HCT116 (cell line): ENCODE measurements at regions of chr6 and their contacts with region 1.

Region 1: DNA sequence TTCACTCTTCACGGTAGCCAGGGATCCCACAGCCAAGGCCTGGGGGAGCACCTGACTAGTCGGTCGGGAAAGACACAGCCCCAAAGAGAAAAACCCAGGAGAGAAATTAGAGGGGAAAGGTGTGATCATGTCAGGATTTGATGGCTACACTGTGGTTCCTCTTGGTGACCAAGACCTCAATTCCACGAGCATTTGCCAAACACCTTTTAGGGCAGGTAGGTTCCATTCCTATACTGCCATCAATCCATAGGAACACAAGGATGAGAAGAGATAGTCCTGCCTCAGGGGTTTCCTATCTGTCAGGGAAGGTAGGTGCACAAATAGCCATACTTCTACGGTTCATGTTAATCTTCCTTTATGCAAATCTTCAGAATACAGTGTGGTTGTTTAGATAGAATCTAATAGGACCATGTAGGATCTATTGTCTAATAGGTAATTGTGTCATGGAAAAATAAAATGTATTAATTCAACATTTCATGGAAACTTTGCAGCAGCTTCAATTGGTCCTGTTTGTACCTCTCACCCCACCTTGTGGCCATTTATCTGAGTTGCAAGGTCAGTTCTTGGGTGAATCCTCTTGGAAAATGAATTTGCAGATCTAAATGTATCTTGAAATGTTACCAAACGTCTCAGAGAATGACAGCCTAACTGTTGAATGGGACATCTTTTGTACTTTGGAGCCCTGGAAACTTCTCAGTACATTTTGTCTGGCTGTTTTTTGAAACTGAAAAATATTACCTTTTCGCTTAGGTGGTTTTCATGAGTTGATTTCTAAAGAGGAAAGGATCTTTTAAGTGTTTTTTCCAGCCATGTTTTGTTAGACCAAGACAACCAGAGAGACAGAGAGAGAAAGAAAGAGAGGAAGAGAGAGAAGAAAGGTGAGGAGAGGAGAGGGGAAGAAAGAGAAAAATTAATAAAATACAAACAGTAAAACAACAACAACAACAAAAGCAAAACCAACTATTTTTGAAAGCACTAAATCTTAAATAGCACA is 33.7 kb upstream of the IYD start:
- DNase-seq: peak; percentile 80
- ATAC-seq: peak; percentile 74
- H3K4me3 ChIP-seq: no peak overlapping the region
- H3K27ac ChIP-seq: no peak overlapping the region
- H3K4me1 ChIP-seq: peaks cover 0 to 8% of the 10 kb centered on the region in 2 experiments; a peak in 2 of 4 replicates
- H3K27me3 ChIP-seq: no peaks in the 10 kb centered on the region
- CTCF ChIP-seq: peak; percentile 70 to 94 (median 91)
- POLR2A ChIP-seq: no peak
- RAD21 ChIP-seq: peak; percentile 98

Region 2: GRCh38 chr6:149934249-149935156 is 400.6 kb before region 1 on chr6:
- CTCF ChIA-PET with region 1: no interaction called
- POLR2A ChIA-PET with region 1: no interaction called
- RAD21 ChIA-PET with region 1: no interaction called
- intact Hi-C with region 1: loop called (anchors 5 kb)
- DNase-seq: peak; percentile 76
- ATAC-seq: peak; percentile 67
- H3K4me3 ChIP-seq: no peak overlapping the region
- H3K27ac ChIP-seq: no peak overlapping the region
- H3K4me1 ChIP-seq: peaks cover 0 to 3% of the 10 kb centered on the region in 2 experiments; a peak in 1 of 4 replicates
- H3K27me3 ChIP-seq: no peaks in the 10 kb centered on the region
- CTCF ChIP-seq: peak; percentile 63 to 88 (median 87)
- POLR2A ChIP-seq: no peak
- RAD21 ChIP-seq: peak; percentile 96

Region 3: DNA sequence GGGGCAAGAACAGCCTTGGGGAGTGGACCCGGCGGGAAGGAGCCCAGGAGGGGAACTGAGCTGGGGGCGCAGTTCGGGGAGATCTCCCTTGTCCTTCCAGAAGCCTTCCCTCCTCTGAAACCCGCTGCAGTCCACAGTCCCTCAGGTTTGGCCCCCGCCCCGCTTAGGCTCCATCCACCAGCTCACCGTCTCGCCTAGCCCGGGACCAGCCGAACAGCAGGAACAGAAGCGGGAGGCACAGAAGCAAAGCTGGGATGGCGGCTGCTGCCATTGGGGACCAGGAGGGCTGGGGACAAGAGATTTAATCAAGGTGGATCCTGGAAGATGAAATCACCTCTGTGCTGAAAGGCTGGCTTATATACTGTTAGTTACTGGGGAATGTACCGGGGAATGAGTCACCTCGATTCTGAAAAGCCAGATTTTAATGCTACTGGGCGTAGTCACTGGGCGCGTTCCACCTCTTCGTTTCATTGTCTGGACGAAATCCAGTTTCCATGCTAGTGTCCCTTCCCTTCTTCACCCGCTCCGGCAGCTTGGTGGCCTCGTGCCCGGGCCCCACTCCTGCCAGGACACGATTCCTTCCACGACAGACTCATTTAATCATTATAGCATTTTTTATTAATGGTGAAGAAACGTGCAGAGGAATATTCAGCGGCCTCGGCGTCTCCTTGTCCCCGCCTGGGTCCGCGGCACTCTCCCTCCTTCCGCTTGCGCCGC is 309.7 kb before region 1 on chr6 and contains the start of gene RAET1L:
- CTCF ChIA-PET with region 1: no interaction called
- POLR2A ChIA-PET with region 1: no interaction called
- RAD21 ChIA-PET with region 1: no interaction called
- intact Hi-C with region 1: loop called (anchors 5 kb)
- DNase-seq: peak; percentile 65
- ATAC-seq: peak; percentile 73
- H3K4me3 ChIP-seq: peak within 1 kb of the TSS; percentile 43 to 58
- H3K27ac ChIP-seq: peak within 1 kb of the TSS; percentile 71
- H3K4me1 ChIP-seq: peaks cover 21 to 28% of the 10 kb centered on the region in 2 experiments
- H3K27me3 ChIP-seq: no peaks in the 10 kb centered on the region
- CTCF ChIP-seq: no peak
- POLR2A ChIP-seq: no peak
- RAD21 ChIP-seq: no peak
- total RNA-seq, gene RAET1L: 1.5 TPM

Region 4: DNA sequence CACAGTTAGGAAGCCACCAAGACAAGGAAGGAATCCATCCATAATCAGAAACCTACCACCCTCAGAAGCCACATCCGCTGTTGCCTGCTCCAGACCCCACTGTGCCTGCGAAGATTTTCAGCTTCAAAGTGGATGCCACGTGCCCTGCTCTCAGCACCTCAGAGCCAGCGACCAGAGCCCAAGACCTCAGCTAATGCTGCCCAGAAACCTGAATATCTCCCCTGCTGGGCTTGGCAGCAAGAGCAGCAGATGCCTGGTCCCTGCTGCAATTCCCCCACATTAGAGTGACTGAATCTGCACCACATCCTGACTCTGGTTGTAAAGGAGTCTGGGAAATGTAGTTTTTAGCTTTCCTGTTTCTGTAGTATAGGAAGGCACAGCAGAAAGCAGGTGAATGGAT is 255.5 kb before region 1 on chr6:
- CTCF ChIA-PET with region 1: interaction called, 24 read pairs
- POLR2A ChIA-PET with region 1: interaction called, 5 read pairs
- RAD21 ChIA-PET with region 1: interaction called, 4 to 5 read pairs
- intact Hi-C with region 1: loop called (anchors 1 kb)
- DNase-seq: no peak
- ATAC-seq: no peak
- H3K4me3 ChIP-seq: no peak overlapping the region
- H3K27ac ChIP-seq: no peak overlapping the region
- H3K4me1 ChIP-seq: peaks cover 2 to 20% of the 10 kb centered on the region in 2 experiments; a peak in 3 of 4 replicates
- H3K27me3 ChIP-seq: no peaks in the 10 kb centered on the region
- CTCF ChIP-seq: no peak
- POLR2A ChIP-seq: no peak
- RAD21 ChIP-seq: no peak

Region 5: DNA sequence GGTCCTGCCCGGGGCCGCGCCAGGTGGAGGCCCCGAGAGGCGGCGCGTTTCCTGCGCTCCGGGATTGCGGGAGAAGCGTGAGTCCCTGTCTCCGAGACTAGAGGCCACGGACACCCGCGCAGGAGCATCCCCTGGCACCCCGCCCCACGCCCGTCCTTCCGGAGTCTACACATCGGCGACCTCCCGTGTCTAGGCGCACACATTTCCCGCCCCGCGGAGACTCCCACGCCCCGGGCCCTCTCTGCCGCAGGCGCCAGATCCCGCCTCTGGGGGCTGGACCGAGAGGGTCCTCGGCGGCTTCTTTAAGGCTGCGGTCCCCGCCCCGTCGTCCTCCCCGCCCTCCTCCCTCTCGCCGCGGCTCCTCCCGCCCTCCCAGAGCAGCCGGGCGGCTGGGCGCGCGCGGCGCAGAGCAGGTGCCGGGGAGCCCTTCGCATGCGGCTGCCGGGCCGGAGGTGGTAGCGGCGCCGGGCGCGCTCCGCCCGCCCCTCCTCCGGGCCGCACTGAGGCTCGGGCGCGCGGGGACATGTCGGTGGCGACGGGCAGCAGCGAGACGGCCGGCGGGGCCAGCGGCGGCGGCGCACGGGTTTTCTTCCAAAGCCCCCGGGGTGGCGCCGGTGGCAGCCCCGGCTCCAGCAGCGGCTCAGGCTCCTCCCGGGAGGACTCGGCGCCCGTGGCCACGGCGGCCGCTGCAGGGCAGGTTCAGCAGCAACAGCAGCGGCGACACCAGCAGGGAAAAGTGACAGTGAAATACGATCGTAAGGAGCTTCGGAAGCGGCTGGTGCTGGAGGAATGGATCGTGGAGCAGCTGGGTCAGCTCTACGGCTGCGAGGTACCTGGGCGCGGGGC is 192.2 kb before region 1 on chr6 and contains the start of gene PPP1R14C:
- CTCF ChIA-PET with region 1: no interaction called
- POLR2A ChIA-PET with region 1: no interaction called
- RAD21 ChIA-PET with region 1: no interaction called
- intact Hi-C with region 1: loop called (anchors 10 kb)
- DNase-seq: no peak
- ATAC-seq: peak; percentile 83
- H3K4me3 ChIP-seq: peak within 1 kb of the TSS; percentile 60 to 69
- H3K27ac ChIP-seq: peak within 1 kb of the TSS; percentile 32; the same call in 1 of the 2 replicates
- H3K4me1 ChIP-seq: peaks cover 15 to 38% of the 10 kb centered on the region in 2 experiments
- H3K27me3 ChIP-seq: no peaks in the 10 kb centered on the region
- CTCF ChIP-seq: no peak
- POLR2A ChIP-seq: no peak
- RAD21 ChIP-seq: no peak
- total RNA-seq, gene PPP1R14C: 7.8 TPM

Region 6: DNA sequence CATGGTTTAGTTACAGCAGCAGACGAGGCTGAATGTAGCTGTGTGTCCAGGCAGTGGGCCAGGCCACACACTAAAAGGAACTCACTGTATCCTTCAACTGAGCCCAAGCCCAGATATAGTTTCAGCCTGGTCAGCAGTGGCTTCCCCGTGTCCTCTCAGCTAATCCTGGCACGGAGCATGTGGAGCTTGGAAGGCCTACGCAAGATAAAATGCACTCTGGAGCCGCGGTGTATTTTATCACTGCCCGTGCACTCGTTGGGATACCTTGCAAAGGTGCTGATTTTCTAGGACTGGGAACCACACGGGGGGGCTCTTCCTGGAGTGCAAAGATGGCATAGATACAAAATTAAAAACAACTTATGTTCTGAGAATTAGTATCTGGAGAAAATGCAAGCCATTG is 14.6 kb before region 1 on chr6:
- CTCF ChIA-PET with region 1: no interaction called
- POLR2A ChIA-PET with region 1: no interaction called
- RAD21 ChIA-PET with region 1: no interaction called
- intact Hi-C with region 1: no loop called
- DNase-seq: no peak
- ATAC-seq: no peak
- H3K4me3 ChIP-seq: no peak overlapping the region
- H3K27ac ChIP-seq: no peak overlapping the region
- H3K4me1 ChIP-seq: peaks cover 3 to 8% of the 10 kb centered on the region in 2 experiments; a peak in 2 of 4 replicates
- H3K27me3 ChIP-seq: no peaks in the 10 kb centered on the region
- CTCF ChIP-seq: no peak
- POLR2A ChIP-seq: no peak
- RAD21 ChIP-seq: no peak

Region 7: DNA sequence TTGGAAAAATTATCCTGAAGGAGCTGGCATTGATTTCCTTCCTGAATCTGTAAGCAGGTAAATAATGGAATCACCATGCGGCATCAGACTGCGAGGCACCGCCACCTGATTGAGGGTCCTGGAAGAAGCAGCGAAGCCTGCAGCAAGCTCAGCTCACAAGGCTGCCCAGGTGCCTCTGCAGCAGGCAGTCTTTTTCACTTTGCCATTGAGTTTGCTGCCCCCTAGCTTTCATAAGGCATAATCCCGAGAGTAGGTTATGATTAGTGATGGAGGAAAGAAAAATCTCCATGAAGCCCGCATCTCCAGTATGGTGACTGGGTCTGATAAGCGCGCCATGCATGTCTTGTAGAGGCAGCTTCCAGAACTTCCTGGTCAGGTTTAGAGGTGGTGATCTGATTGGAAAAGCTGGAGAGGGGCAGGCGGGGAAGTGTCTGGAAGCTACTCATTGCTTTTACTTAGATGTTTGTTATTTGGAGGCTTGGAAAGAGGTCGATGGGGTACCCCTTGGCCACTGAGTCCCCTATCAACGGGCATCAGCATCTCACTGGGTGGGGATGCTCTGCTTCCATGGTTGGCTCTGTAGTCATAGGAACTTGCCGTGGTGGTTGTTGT is 60.4 kb after region 1 on chr6:
- CTCF ChIA-PET with region 1: interaction called, 4 read pairs
- POLR2A ChIA-PET with region 1: no interaction called
- RAD21 ChIA-PET with region 1: no interaction called
- intact Hi-C with region 1: loop called (anchors 5 kb)
- DNase-seq: peak; percentile 49
- ATAC-seq: peak; percentile 97
- H3K4me3 ChIP-seq: no peak overlapping the region
- H3K27ac ChIP-seq: no peak overlapping the region
- H3K4me1 ChIP-seq: peaks cover 0 to 3% of the 10 kb centered on the region in 2 experiments; a peak in 1 of 4 replicates
- H3K27me3 ChIP-seq: no peaks in the 10 kb centered on the region
- CTCF ChIP-seq: peak; percentile 69 to 89 (median 83)
- POLR2A ChIP-seq: no peak
- RAD21 ChIP-seq: peak; percentile 95

Region 8: DNA sequence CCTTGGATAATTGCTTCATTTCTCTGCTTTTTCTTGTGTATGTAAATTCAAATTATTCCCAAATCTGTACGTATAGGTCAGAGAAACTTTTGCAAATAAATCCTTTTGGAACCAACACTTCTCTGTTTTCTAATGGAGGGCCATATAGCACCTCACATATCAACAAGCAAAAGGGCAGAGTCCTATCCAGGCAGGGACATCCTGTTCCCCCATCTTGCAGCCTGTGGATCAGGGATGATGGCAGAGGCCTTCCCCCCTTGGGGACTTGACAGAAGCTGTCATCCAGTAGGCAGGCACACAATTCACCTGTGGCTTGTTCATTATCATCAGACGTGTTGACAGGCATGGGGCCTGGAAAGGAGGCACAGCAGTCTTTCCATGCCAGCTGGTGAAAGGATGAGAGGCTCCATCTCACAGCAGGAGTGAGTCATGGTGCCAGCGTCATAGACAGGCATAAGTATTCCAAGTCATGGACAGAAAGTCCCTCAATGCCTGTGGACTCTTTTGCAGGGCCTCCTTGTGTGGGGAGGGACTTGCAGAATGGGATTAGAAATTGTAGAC is 232.8 kb after region 1 on chr6:
- CTCF ChIA-PET with region 1: no interaction called
- POLR2A ChIA-PET with region 1: no interaction called
- RAD21 ChIA-PET with region 1: no interaction called
- intact Hi-C with region 1: no loop called
- DNase-seq: no peak
- ATAC-seq: no peak; the same call in 1 of the 2 replicates
- H3K4me3 ChIP-seq: no peak overlapping the region
- H3K27ac ChIP-seq: no peak overlapping the region
- H3K4me1 ChIP-seq: no peaks in the 10 kb centered on the region
- H3K27me3 ChIP-seq: peaks cover 5% of the 10 kb centered on the region; the same call in 1 of the 2 replicates
- CTCF ChIP-seq: no peak
- POLR2A ChIP-seq: no peak
- RAD21 ChIP-seq: no peak